T-cell (primary cell): ENCODE measurements at regions of chr4 and their contacts with region 1.

Region 1: DNA sequence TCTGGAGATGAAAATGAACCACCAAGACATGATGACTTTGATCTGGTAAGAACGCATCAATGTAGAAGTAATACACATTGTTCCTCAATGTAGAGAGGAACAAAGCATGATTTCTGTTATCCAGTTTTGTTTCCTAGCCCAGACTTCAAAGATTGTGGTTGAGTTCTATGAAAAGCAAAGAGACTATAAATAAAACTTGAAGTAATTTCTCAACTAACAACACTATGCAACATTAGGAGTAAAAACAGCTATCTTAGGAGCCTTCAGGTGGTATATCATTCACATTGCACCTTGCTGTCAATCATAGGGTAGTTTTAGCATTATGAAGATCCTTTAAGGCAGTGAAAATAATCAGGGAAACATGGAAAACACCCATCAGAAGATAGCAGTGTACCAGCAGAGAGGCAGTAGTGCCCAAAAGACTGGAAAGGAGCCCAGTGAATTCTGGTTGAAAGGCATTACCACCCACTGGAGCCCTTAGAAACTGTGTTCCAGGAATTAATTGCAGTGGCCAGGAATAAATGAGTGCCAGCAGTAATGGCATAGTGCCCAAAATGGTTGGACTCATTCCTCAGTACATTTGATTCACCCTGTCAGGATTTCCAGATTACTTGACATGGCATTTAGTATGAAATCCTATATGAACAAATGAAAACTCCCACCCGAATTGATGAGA is 300.7 kb upstream of the CXXC4 start:
- DNase-seq: no peak
- ATAC-seq: no peak
- H3K4me3 ChIP-seq: no peak overlapping the region
- H3K4me3 Mint-ChIP-seq: no peak overlapping the region
- H3K27ac ChIP-seq: no peak overlapping the region
- H3K27ac Mint-ChIP-seq: no peak overlapping the region
- H3K4me1 ChIP-seq: no peaks in the 10 kb centered on the region
- H3K4me1 Mint-ChIP-seq: no peaks in the 10 kb centered on the region
- H3K27me3 ChIP-seq: no peaks in the 10 kb centered on the region
- H3K27me3 Mint-ChIP-seq: no peaks in the 10 kb centered on the region

Region 2: GRCh38 chr4:104848597-104849225 is 53.3 kb after region 1 on chr4:
- CTCF ChIA-PET with region 1: no interaction called
- POLR2A ChIA-PET with region 1: no interaction called
- DNase-seq: no peak
- ATAC-seq: no peak
- H3K4me3 ChIP-seq: no peak overlapping the region
- H3K4me3 Mint-ChIP-seq: no peak overlapping the region
- H3K27ac ChIP-seq: no peak overlapping the region
- H3K27ac Mint-ChIP-seq: no peak overlapping the region
- H3K4me1 ChIP-seq: no peaks in the 10 kb centered on the region
- H3K4me1 Mint-ChIP-seq: no peaks in the 10 kb centered on the region
- H3K27me3 ChIP-seq: peaks cover 0 to 2% of the 10 kb centered on the region in 2 experiments
- H3K27me3 Mint-ChIP-seq: peaks cover 0 to 4% of the 10 kb centered on the region in 2 donors

Region 3: GRCh38 chr4:105422207-105422920 is 627.0 kb after region 1 on chr4:
- CTCF ChIA-PET with region 1: no interaction called
- POLR2A ChIA-PET with region 1: interaction called in 1 of 2 experiments, 11 read pairs
- DNase-seq: no peak
- ATAC-seq: no peak
- H3K4me3 ChIP-seq: no peak overlapping the region
- H3K4me3 Mint-ChIP-seq: no peak overlapping the region
- H3K27ac ChIP-seq: no peak overlapping the region
- H3K27ac Mint-ChIP-seq: no peak overlapping the region
- H3K4me1 ChIP-seq: peaks cover 0 to 6% of the 10 kb centered on the region in 2 experiments
- H3K4me1 Mint-ChIP-seq: peaks cover 0 to 9% (median 7%) of the 10 kb centered on the region in 3 donors
- H3K27me3 ChIP-seq: no peaks in the 10 kb centered on the region
- H3K27me3 Mint-ChIP-seq: no peaks in the 10 kb centered on the region